Heart right ventricle (tissue), 16 donors: ENCODE measurements at regions of chr15 and their contacts with region 1.

Region 1: DNA sequence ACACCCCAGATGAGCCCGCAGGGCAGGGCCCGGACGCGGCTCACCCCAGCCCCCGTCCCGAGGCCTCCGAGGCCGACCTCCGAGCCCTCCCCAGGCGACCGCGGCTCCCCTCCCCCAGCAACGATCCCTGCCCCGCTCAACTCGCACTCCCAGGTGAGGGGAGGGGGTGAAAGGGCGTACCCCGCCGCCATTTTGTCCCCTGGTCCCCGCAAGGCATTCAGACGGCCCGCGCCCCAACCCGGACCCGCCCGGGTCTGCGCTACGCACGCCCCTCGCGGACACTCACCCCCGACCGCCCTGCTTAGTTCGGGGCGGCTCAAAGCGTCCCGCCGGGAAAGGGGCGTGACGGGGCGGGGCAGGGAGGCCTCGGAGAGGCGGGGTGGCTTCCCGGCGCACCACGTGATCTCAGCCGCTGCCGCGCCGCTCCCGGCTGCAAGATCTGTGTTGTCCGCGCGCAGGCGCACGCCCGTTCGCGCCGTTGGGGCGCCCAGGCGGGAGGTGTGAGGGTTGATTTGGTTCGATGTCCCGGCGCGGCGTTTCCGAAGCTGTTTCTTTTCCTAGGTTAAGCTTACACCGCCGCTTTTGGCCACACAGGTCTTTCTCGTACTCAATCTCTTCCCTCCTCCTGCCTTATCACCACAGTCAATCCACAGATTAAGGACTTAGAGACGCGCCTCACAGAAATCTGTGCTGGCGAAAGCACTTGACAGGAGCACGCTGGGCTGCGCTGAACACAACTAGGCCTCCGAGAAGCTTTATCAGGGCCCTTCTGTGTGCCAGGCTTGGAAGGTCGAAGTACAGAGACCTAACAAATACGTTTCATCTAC is at the start of gene SCAPER:
- DNase-seq: peak; percentile 92 to 95
- ATAC-seq: peak; percentile 97 to 99 (median 98)
- H3K4me3 ChIP-seq: peak within 1 kb of the TSS; percentile 67 to 97 (median 84)
- H3K27ac ChIP-seq: peak within 1 kb of the TSS; percentile 76 to 98 (median 92)
- H3K4me1 ChIP-seq: peaks cover 8 to 37% (median 30%) of the 10 kb centered on the region in 9 donors
- H3K27me3 ChIP-seq: no peaks in the 10 kb centered on the region
- CTCF ChIP-seq: peak in 5 of 9 donors; percentile 22 to 45 (median 23)
- total RNA-seq, gene SCAPER: 33.9 to 48.1 (median 40.2) TPM

Region 2: GRCh38 chr15:76931397-76932007 is 26.3 kb after region 1 on chr15 and contains the start of gene RCN2:
- intact Hi-C with region 1: loop called in 2 of 10 experiments (anchors 1 to 2 kb)
- DNase-seq: peak; percentile 95 to 97
- ATAC-seq: peak; percentile 100
- H3K4me3 ChIP-seq: peak within 1 kb of the TSS; percentile 58 to 87 (median 74)
- H3K27ac ChIP-seq: peak within 1 kb of the TSS; percentile 24 to 88 (median 81)
- H3K4me1 ChIP-seq: peaks cover 0 to 23% (median 17%) of the 10 kb centered on the region in 9 donors
- H3K27me3 ChIP-seq: no peaks in the 10 kb centered on the region
- CTCF ChIP-seq: peak in 3 of 9 donors; percentile 5 to 17 (median 11)
- total RNA-seq, gene RCN2: 23.3 to 29.9 (median 27.5) TPM